H1 (cell line): ENCODE measurements at regions of chr11 and their contacts with region 1.

Region 1: GRCh38 chr11:65988791-65989592 is 13.0 kb downstream of the EIF1AD start:
- DNase-seq: peak; percentile 78 to 90
- H3K4me3 ChIP-seq: no peak overlapping the region
- H3K27ac ChIP-seq: no peak overlapping the region
- H3K4me1 ChIP-seq: no peaks in the 10 kb centered on the region
- H3K27me3 ChIP-seq: no peaks in the 10 kb centered on the region; a peak in 1 of 7 replicates
- CTCF ChIP-seq: peak; percentile 79 to 99 (median 99)
- EP300 ChIP-seq: no peak
- POLR2A ChIP-seq: no peak
- RAD21 ChIP-seq: peak; percentile 96

Region 2: GRCh38 chr11:65976216-65977176 is 12.5 kb before region 1 on chr11:
- CTCF ChIA-PET with region 1: interaction called, 8 read pairs
- POLR2A ChIA-PET with region 1: interaction called, 11 read pairs
- DNase-seq: no peak
- H3K4me3 ChIP-seq: no peak overlapping the region
- H3K27ac ChIP-seq: no peak overlapping the region
- H3K4me1 ChIP-seq: no peaks in the 10 kb centered on the region
- H3K27me3 ChIP-seq: no peaks in the 10 kb centered on the region
- CTCF ChIP-seq: no peak
- EP300 ChIP-seq: no peak
- POLR2A ChIP-seq: no peak
- RAD21 ChIP-seq: no peak

Region 3: DNA sequence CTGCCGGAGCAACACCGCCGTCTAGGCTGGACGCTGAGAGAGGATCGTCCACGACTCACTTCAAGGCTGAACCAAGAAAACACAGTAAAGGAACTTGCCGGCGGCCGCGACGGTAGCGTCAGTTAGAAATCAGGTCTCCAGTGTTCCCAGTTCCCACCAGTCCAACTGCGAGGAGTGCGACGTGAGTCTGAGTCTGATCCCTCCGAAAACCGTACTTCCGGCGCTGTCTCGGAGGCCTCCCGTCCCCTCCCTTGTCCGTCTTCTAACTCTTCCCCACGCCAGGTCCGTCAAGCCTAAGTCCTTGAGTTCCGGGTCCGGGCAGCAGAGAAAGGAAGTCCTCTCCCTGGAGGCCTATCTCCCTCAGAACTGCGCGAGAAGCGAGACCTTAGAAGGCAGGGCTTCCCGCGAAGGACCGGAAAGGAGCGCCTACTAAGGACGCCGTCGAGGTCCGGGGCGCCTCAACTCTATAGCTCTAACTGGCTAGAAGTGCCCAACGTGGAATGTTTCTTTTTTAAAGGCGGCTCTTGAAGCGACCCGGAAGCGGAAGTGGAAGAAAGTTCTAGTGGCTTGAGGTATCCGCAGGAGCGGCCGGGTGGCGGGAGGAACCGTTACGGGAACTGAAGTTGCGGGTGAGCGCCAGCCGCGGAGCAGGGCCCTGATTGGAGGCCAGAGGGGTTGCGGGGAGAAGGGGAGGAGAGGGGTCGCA is 13.1 kb after region 1 on chr11 and contains the starts of genes BANF1 and EIF1AD:
- CTCF ChIA-PET with region 1: interaction called, 15 read pairs
- POLR2A ChIA-PET with region 1: interaction called, 4 read pairs
- DNase-seq: peak; percentile 81 to 94
- H3K4me3 ChIP-seq: peak within 1 kb of the TSS; percentile 67 to 99 (median 94)
- H3K27ac ChIP-seq: peak within 1 kb of the TSS; percentile 87
- H3K4me1 ChIP-seq: peaks cover 0 to 10% (median 5%) of the 10 kb centered on the region in 4 experiments; a peak in 5 of 7 replicates
- H3K27me3 ChIP-seq: no peaks in the 10 kb centered on the region
- CTCF ChIP-seq: 0 out of 4 replicates have a peak, but pooled peaks of 1 of the 3 experiments have one; percentile 2
- EP300 ChIP-seq: peak in 1 of 2 experiments; percentile 71; a peak in 1 of 3 replicates
- POLR2A ChIP-seq: peak in 1 of 2 experiments; percentile 80; a peak in 2 of 3 replicates
- RAD21 ChIP-seq: 0 out of 4 replicates have a peak, but pooled peaks of 1 of the 2 experiments have one; percentile 0
- total RNA-seq, gene BANF1: 330 and 345 TPM in 2 replicates
- total RNA-seq, gene EIF1AD: 35.8 and 39.9 TPM in 2 replicates

Region 4: GRCh38 chr11:66011239-66011784 is 22.3 kb after region 1 on chr11:
- CTCF ChIA-PET with region 1: interaction called, 15 read pairs
- POLR2A ChIA-PET with region 1: no interaction called
- DNase-seq: no peak
- H3K4me3 ChIP-seq: peak overlapping the region; percentile 2 to 54 (median 36); a peak in 6 of 8 replicates
- H3K27ac ChIP-seq: no peak overlapping the region
- H3K4me1 ChIP-seq: peaks cover 0 to 20% (median 9%) of the 10 kb centered on the region in 4 experiments; a peak in 5 of 7 replicates
- H3K27me3 ChIP-seq: peaks cover 6 to 26% (median 24%) of the 10 kb centered on the region in 4 experiments
- CTCF ChIP-seq: no peak
- EP300 ChIP-seq: no peak
- POLR2A ChIP-seq: no peak
- RAD21 ChIP-seq: no peak

Region 5: DNA sequence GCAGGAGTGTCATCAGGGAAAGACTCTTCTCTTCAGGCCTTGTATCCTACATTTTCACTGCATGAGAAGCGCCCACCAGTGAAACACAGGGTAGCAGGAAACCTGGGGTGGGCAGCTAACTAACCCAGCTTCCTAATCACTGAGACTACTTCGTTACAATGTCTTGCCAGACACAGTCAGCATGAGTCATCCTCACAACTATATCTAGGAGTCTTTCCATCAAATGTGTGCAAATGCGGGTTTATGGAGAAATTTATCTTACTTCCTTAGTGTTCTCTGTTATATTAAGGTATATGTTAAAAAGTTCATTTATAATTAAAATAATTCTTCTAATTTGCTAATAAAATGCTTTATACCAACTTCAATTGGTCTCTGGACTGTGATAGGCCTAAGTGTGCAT is 199.6 kb after region 1 on chr11:
- CTCF ChIA-PET with region 1: no interaction called
- POLR2A ChIA-PET with region 1: no interaction called
- DNase-seq: no peak
- H3K4me3 ChIP-seq: no peak overlapping the region
- H3K27ac ChIP-seq: no peak overlapping the region
- H3K4me1 ChIP-seq: no peaks in the 10 kb centered on the region; a peak in 1 of 7 replicates
- H3K27me3 ChIP-seq: no peaks in the 10 kb centered on the region
- CTCF ChIP-seq: no peak
- EP300 ChIP-seq: no peak
- POLR2A ChIP-seq: no peak
- RAD21 ChIP-seq: no peak